Psoas muscle (tissue), 8 donors: ENCODE measurements at regions of chr1 and their contacts with region 1.

Region 1: DNA sequence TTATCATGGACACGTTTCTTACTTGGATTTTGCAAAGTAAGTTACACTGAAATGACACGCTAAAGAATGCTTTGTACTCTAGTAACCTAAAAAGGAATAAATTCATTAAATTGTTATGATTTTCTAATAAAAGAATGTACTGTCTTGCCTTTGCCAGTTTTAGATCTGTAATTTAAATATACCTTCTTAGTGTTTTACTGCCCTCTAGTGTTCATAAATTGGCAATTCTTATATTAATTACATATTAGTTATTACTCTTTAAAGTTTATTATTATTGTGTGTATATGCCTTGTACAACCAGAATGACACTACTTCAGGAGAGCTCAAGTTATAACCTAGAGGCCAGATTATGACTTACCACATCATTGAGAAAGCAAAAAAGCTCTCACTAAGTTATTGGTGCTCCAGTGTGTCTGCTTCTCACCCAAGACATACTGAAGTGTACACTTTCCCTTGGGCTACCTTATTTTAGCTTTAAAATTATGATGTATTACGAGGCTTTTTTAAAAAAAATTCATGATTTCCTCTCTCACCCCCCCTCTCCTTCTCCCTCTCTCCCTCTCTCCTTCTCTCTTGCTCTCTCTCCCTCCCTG is 169.9 kb downstream of the HS2ST1 start:
- DNase-seq: no peak
- ATAC-seq: peak in 1 of 4 donors; percentile 61
- H3K4me3 ChIP-seq: no peak overlapping the region
- H3K27ac ChIP-seq: no peak overlapping the region
- H3K4me1 ChIP-seq: no peaks in the 10 kb centered on the region
- H3K27me3 ChIP-seq: no peaks in the 10 kb centered on the region
- CTCF ChIP-seq: peak; percentile 72

Region 2: DNA sequence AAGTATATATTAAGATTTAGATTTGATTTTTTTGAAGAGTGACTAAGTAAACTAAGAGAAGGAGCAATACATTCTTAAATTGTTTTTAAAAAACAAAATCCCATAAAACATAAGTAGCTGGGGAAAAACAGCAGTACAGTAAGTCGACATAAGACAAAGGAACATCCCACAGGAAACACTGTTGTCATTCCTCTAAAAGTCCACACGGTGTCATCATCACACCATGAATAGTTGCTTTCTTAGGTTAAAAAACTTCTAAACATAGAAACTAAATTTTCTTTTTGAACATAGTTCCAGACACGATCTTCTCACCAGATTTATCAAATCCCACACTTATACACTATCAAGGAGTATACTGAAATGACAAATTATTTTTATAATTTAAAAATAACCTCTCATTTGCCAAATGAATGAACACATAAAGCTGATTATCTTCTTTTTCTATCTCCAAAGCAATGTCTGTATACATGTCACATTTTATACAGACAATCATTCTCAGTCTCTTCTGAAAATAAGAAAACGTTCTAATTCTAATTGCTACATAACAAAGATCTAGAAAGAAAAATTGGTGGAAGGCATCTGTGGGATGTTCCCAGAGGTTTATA is 704.0 kb before region 1 on chr1:
- intact Hi-C with region 1: loop called (anchors 10 kb)
- DNase-seq: no peak
- ATAC-seq: peak in 3 of 4 donors; percentile 57 to 83 (median 72)
- H3K4me3 ChIP-seq: peak overlapping the region; percentile 19
- H3K27ac ChIP-seq: no peak overlapping the region
- H3K4me1 ChIP-seq: no peaks in the 10 kb centered on the region
- H3K27me3 ChIP-seq: no peaks in the 10 kb centered on the region
- CTCF ChIP-seq: peak; percentile 85

Region 3: GRCh38 chr1:86704458-86704971 is 379.8 kb before region 1 on chr1 and contains the start of gene SH3GLB1:
- intact Hi-C with region 1: loop called in 1 of 2 experiments (anchors 10 kb)
- DNase-seq: peak; percentile 91 to 95
- ATAC-seq: peak; percentile 86 to 89 (median 88)
- H3K4me3 ChIP-seq: peak within 1 kb of the TSS; percentile 93
- H3K27ac ChIP-seq: peak within 1 kb of the TSS; percentile 99
- H3K4me1 ChIP-seq: peaks cover 27% of the 10 kb centered on the region
- H3K27me3 ChIP-seq: no peaks in the 10 kb centered on the region
- CTCF ChIP-seq: peak; percentile 90
- total RNA-seq, gene SH3GLB1: 158 to 315 (median 198) TPM

Region 4: GRCh38 chr1:86833461-86834215 is 250.7 kb before region 1 on chr1:
- intact Hi-C with region 1: loop called (anchors 2 to 5 kb)
- DNase-seq: peak; percentile 61 to 70
- ATAC-seq: peak; percentile 87 to 98 (median 91)
- H3K4me3 ChIP-seq: no peak overlapping the region
- H3K27ac ChIP-seq: no peak overlapping the region
- H3K4me1 ChIP-seq: no peaks in the 10 kb centered on the region
- H3K27me3 ChIP-seq: no peaks in the 10 kb centered on the region
- CTCF ChIP-seq: peak; percentile 70